ENCODE measurements at regions of chr13 and their contacts with region 1.

Region 1: DNA sequence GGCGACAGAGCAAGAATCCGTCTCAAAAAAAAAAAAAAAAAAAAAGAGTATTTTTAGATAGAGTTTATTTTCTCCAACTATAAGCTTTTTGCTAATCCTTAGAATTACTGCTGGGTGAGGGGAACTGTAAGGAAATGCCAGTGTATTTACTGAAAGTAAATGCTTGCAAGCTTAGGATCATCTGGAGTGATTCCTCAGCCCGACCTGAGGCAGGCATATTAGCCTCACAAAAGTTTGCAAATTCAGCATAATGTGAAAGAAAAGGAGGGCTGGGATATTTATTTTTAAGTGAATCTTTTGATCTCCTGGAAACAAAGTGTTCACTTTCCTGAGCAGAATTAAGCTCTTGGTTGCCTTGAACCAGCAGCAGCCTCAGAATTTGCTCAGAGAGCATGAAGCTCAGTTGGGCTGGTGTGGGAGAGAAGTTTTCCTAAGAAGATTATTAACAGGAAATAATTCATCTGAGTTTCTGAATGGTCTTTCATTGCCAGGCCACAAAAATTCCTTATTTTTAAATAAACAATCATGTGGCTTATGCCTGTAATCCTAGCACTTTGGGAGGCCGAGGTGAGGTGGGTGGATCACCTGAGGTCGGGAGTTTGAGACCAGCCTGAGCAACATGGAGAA is 24.7 kb upstream of the SPATA13 start:
- DNase-seq: peak; percentile 77
- ATAC-seq: peak; percentile 76
- H3K4me3 ChIP-seq: no peak overlapping the region
- H3K27ac ChIP-seq: 0 out of 2 replicates have a peak overlapping the region, but pooled peaks have one; percentile 46
- H3K4me1 ChIP-seq: peaks cover 2% of the 10 kb centered on the region
- H3K27me3 ChIP-seq: no peaks in the 10 kb centered on the region
- CTCF ChIP-seq: no peak
- POLR2A ChIP-seq: no peak
- RAD21 ChIP-seq: no peak

Region 2: GRCh38 chr13:23715762-23716235 is 420.0 kb before region 1 on chr13:
- CTCF ChIA-PET with region 1: no interaction called
- POLR2A ChIA-PET with region 1: no interaction called
- dilution Hi-C with region 1: no loop called
- in situ Hi-C with region 1: no loop called
- intact Hi-C with region 1: no loop called
- DNase-seq: no peak
- ATAC-seq: no peak
- H3K4me3 ChIP-seq: no peak overlapping the region
- H3K27ac ChIP-seq: no peak overlapping the region
- H3K4me1 ChIP-seq: peaks cover 8% of the 10 kb centered on the region
- H3K27me3 ChIP-seq: no peaks in the 10 kb centered on the region
- CTCF ChIP-seq: peak; percentile 25; the same call in 1 of the 2 replicates
- POLR2A ChIP-seq: no peak
- RAD21 ChIP-seq: peak; percentile 48

Region 3: DNA sequence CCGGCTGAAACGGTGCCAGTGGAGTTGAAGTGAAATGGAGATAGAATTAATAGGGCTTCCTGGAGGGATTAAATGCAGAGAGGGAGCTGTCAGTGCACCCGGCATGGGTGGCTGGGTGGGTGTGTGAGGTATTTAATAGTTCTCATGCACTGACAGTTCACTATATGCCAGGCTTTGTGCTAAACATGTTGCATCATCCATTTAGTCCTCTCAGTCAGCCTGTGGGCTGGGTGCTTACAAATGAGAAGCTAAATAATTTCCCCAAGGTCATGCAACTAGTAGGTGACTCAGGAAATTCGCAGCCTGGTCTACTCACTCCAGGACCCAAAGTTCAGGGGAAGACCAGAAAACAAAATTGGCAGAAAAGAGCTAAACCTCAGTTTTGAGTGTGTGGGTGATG is 38.7 kb before region 1 on chr13:
- CTCF ChIA-PET with region 1: no interaction called
- POLR2A ChIA-PET with region 1: interaction called, 14 read pairs
- dilution Hi-C with region 1: no loop called
- in situ Hi-C with region 1: no loop called
- intact Hi-C with region 1: no loop called
- DNase-seq: peak; percentile 76
- ATAC-seq: peak; percentile 67
- H3K4me3 ChIP-seq: no peak overlapping the region
- H3K27ac ChIP-seq: no peak overlapping the region
- H3K4me1 ChIP-seq: no peaks in the 10 kb centered on the region
- H3K27me3 ChIP-seq: no peaks in the 10 kb centered on the region; the same call in 1 of the 2 replicates
- CTCF ChIP-seq: no peak
- POLR2A ChIP-seq: no peak
- RAD21 ChIP-seq: no peak

Region 4: DNA sequence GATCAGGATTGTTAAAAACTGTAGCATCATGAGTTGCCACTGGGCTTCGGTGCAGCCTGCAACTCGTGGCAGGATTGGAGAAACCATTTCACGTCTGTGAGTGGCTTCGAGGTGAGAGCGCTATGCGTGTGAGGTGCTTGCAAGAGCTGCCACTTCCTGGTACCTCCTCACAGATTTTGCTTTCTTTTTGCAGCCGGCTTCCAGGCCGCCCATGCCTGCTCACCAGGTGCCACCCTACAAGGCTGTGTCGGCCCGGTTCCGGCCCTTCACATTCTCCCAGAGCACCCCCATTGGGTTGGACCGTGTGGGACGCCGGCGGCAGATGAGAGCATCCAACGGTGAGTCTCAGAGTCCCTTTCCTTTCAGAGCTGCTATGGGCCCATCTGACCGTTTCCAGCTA is 115.7 kb after region 1 on chr13:
- CTCF ChIA-PET with region 1: no interaction called
- POLR2A ChIA-PET with region 1: no interaction called
- dilution Hi-C with region 1: no loop called
- in situ Hi-C with region 1: no loop called
- intact Hi-C with region 1: no loop called
- DNase-seq: no peak
- ATAC-seq: no peak
- H3K4me3 ChIP-seq: no peak overlapping the region
- H3K27ac ChIP-seq: no peak overlapping the region
- H3K4me1 ChIP-seq: no peaks in the 10 kb centered on the region
- H3K27me3 ChIP-seq: no peaks in the 10 kb centered on the region
- CTCF ChIP-seq: no peak
- POLR2A ChIP-seq: no peak
- RAD21 ChIP-seq: no peak

Measured in IMR-90 (cell line).